ENCODE measurements at regions of chr7 and their contacts with region 1.

Region 1: GRCh38 chr7:55365675-55366460 is 731 bp downstream of the LANCL2 start:
- DNase-seq: peak; percentile 96
- H3K4me3 Mint-ChIP-seq: peak overlapping the region; percentile 92
- H3K27ac Mint-ChIP-seq: peak overlapping the region; percentile 100
- H3K4me1 Mint-ChIP-seq: peaks cover 6% of the 10 kb centered on the region
- H3K27me3 Mint-ChIP-seq: no peaks in the 10 kb centered on the region
- CTCF ChIP-seq: peak; percentile 10

Region 2: GRCh38 chr7:55158541-55159382 is 207.1 kb before region 1 on chr7:
- CTCF ChIA-PET with region 1: no interaction called
- POLR2A ChIA-PET with region 1: no interaction called
- intact Hi-C with region 1: no loop called
- DNase-seq: no peak
- H3K4me3 Mint-ChIP-seq: no peak overlapping the region
- H3K27ac Mint-ChIP-seq: no peak overlapping the region
- H3K4me1 Mint-ChIP-seq: no peaks in the 10 kb centered on the region
- H3K27me3 Mint-ChIP-seq: no peaks in the 10 kb centered on the region
- CTCF ChIP-seq: no peak

Region 3: DNA sequence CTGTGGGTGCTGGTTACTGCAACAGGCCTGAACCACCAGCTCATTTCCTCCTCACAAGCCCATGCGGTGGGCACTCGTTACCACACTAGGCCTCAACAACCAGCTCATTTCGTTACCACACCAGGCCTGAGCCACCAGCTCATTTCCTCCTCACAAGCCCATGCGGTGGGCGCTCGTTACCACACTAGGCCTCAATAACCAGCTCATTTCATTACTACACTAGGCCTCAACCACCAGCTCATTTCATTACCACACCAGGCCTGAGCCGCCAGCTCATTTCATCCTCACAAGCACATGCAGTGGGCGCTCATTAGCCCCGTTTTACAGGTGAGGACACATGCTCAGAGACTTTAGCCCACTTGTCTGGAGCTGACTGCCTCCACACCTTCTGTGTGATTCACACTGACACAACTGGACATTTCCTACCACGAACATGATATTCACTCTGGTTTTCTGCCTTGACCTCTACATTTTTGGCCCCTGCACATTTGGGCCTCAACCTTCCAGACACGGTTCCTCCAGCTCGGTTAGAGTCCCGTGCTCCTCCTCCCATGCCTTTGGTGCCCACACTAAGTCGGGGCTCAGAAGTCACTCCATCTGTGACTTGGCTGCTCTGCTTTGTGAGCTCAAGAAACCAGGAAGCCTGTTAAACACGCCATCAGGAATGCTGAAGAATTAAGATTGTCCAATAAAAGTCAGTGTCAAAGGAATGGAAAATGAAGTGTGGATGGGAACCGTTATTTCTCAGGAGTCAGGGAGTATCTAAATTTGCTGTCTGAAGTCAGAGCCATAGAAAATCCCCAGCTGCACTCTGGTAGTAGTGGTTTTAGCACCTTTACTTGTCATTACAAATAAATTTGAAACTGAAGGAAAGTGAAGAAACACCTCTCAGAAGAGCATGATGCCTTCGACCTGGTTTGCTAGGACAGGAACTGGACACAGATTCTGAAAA is 56.6 kb before region 1 on chr7:
- CTCF ChIA-PET with region 1: interaction called, 3 read pairs
- POLR2A ChIA-PET with region 1: interaction called, 57 read pairs
- intact Hi-C with region 1: no loop called
- DNase-seq: no peak
- H3K4me3 Mint-ChIP-seq: no peak overlapping the region
- H3K27ac Mint-ChIP-seq: no peak overlapping the region
- H3K4me1 Mint-ChIP-seq: peaks cover 19% of the 10 kb centered on the region
- H3K27me3 Mint-ChIP-seq: peaks cover 9% of the 10 kb centered on the region
- CTCF ChIP-seq: no peak

Region 4: DNA sequence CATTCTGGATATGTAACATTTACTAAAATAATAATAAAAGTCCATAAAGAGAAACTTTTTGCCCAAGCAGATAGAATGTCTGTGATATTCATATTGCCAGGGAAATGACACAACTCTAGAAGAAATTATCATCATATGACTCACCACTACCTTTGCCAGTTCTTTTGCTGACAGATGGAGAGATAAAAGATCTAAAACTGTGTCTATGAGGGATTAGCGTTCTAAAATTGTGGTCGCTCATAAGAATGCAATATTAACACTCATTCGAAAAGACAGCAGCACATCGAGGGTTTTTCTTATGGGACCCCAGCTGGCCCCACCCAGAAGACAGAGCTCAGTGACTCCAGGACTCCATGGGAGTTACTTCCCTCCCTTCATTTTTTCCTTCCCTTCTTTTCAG is 17.4 kb before region 1 on chr7:
- CTCF ChIA-PET with region 1: interaction called, 3 read pairs
- POLR2A ChIA-PET with region 1: interaction called, 32 read pairs
- intact Hi-C with region 1: no loop called
- DNase-seq: peak; percentile 57
- H3K4me3 Mint-ChIP-seq: peak overlapping the region; percentile 29
- H3K27ac Mint-ChIP-seq: no peak overlapping the region
- H3K4me1 Mint-ChIP-seq: peaks cover 13% of the 10 kb centered on the region
- H3K27me3 Mint-ChIP-seq: no peaks in the 10 kb centered on the region
- CTCF ChIP-seq: no peak

Region 5: DNA sequence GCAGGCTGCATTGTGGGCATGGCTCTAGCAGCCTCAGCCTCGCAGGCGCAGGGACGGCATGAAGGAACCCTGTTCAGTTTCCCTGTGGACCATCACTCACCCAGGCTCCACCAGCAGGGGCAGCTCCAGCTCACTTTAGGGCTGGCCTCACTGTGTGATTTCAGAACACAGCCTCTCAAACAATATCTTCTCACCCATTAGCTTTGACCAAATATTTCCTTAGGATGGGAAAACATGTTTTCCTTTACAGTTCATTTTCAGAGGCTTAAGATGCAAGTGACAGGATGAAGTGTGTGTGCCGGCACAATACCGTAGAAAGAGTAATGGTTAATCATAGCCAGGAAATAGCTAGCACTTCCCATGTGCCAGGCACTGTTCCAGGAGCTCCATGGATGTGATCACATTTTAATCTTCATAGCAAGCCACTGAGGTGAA is 57.4 kb after region 1 on chr7:
- CTCF ChIA-PET with region 1: no interaction called
- POLR2A ChIA-PET with region 1: no interaction called
- intact Hi-C with region 1: no loop called
- DNase-seq: no peak
- H3K4me3 Mint-ChIP-seq: no peak overlapping the region
- H3K27ac Mint-ChIP-seq: no peak overlapping the region
- H3K4me1 Mint-ChIP-seq: no peaks in the 10 kb centered on the region
- H3K27me3 Mint-ChIP-seq: no peaks in the 10 kb centered on the region
- CTCF ChIP-seq: no peak

Region 6: GRCh38 chr7:56097700-56098099 is 731.8 kb after region 1 on chr7:
- CTCF ChIA-PET with region 1: no interaction called
- POLR2A ChIA-PET with region 1: no interaction called
- intact Hi-C with region 1: no loop called
- DNase-seq: peak; percentile 78
- H3K4me3 Mint-ChIP-seq: no peak overlapping the region
- H3K27ac Mint-ChIP-seq: no peak overlapping the region
- H3K4me1 Mint-ChIP-seq: peaks cover 4% of the 10 kb centered on the region
- H3K27me3 Mint-ChIP-seq: no peaks in the 10 kb centered on the region
- CTCF ChIP-seq: no peak

Measured in MCF 10A (cell line).